Activated T-helper 2 cell treated with anti-CD3 and anti-CD28 coated beads, Interferon-gamma antibody, Interleukin-2, Interleukin-4, amounts not matched to agents 10 μg/mL and 5 μg/mL and 100 μg/mL, durations not matched to agents 14 hours and 24 hours and 36 hours (primary cell): ENCODE measurements at regions of chr6 and their contacts with region 1.

Region 1: GRCh38 chr6:21593412-21593926 is at the start of gene SOX4:
- DNase-seq: peak; percentile 77
- H3K4me3 Mint-ChIP-seq: no peak within 1 kb of the TSS
- H3K27ac Mint-ChIP-seq: peak within 1 kb of the TSS; percentile 91
- H3K4me1 Mint-ChIP-seq: peaks cover 22% of the 10 kb centered on the region
- H3K27me3 Mint-ChIP-seq: peaks cover 47% of the 10 kb centered on the region
- total RNA-seq, gene SOX4: 20.3 and 20.8 TPM in 2 replicates

Region 2: GRCh38 chr6:20197251-20197650 is 1396.2 kb before region 1 on chr6:
- intact Hi-C with region 1: loop called (anchors 10 kb)
- DNase-seq: no peak
- H3K4me3 Mint-ChIP-seq: no peak overlapping the region
- H3K27ac Mint-ChIP-seq: no peak overlapping the region
- H3K4me1 Mint-ChIP-seq: peaks cover 54% of the 10 kb centered on the region
- H3K27me3 Mint-ChIP-seq: no peaks in the 10 kb centered on the region

Region 3: GRCh38 chr6:20716865-20717264 is 876.6 kb before region 1 on chr6:
- intact Hi-C with region 1: loop called (anchors 5 kb)
- DNase-seq: no peak
- H3K4me3 Mint-ChIP-seq: no peak overlapping the region
- H3K27ac Mint-ChIP-seq: no peak overlapping the region
- H3K4me1 Mint-ChIP-seq: peaks cover 26% of the 10 kb centered on the region
- H3K27me3 Mint-ChIP-seq: no peaks in the 10 kb centered on the region

Region 4: DNA sequence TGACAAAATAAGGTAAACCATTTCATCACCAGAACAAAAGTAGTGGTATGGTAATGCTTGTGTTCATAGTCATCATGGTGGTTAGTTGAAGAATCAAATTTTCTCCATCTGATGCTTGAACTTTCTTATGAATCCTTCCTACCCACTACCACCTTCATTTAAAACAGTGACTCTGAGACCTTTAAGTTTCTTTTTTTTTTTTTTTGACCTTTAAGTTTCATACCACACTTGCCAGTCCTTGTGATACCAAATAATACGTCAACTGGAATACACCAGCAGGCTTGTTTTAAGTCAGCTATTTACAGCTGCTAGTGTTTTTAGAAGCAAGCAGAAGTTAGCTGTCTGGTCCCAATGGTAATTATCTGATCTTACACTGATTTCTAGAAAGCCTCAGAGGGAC is 413.3 kb before region 1 on chr6:
- intact Hi-C with region 1: loop called (anchors 5 kb)
- DNase-seq: no peak
- H3K4me3 Mint-ChIP-seq: no peak overlapping the region
- H3K27ac Mint-ChIP-seq: peak overlapping the region; percentile 53
- H3K4me1 Mint-ChIP-seq: peaks cover 23% of the 10 kb centered on the region
- H3K27me3 Mint-ChIP-seq: no peaks in the 10 kb centered on the region

Region 5: DNA sequence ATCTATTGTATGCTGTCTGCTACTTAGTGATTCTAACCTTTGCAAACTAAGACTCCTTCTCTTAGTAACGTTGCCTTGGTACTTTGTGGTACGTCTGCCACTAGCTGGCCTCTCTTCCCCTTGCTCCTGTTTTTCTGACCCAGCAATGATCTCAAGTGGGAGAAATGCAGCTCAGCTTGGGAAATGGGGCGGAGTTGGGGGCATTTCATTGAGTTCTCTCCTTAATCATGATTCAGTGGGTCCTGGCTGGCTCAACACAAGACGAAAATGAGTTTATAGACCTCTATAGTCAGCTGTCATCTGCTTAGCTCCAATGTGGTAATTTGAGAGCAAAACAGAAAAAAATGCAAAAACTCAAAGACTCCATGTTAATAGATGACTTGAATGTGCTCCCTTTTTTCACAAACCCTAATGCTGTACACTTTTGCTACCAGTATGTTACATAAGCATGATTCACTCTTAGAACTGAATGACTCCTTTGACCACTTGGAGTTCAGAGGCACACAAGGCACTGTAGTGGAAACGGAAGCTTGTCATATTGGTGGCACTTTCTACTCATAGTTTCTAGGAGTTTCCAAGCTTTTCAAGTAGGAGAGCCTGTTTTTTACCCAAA is 55.2 kb before region 1 on chr6:
- intact Hi-C with region 1: no loop called
- DNase-seq: no peak
- H3K4me3 Mint-ChIP-seq: no peak overlapping the region
- H3K27ac Mint-ChIP-seq: no peak overlapping the region
- H3K4me1 Mint-ChIP-seq: no peaks in the 10 kb centered on the region
- H3K27me3 Mint-ChIP-seq: peaks cover 1% of the 10 kb centered on the region

Region 6: GRCh38 chr6:21578523-21578922 is 14.9 kb before region 1 on chr6:
- intact Hi-C with region 1: no loop called
- DNase-seq: no peak
- H3K4me3 Mint-ChIP-seq: no peak overlapping the region
- H3K27ac Mint-ChIP-seq: no peak overlapping the region
- H3K4me1 Mint-ChIP-seq: no peaks in the 10 kb centered on the region
- H3K27me3 Mint-ChIP-seq: peaks cover 2% of the 10 kb centered on the region

Region 7: GRCh38 chr6:21610341-21610740 is 16.9 kb after region 1 on chr6:
- intact Hi-C with region 1: no loop called
- DNase-seq: no peak
- H3K4me3 Mint-ChIP-seq: no peak overlapping the region
- H3K27ac Mint-ChIP-seq: no peak overlapping the region
- H3K4me1 Mint-ChIP-seq: peaks cover 3% of the 10 kb centered on the region
- H3K27me3 Mint-ChIP-seq: peaks cover 15% of the 10 kb centered on the region

Region 8: GRCh38 chr6:21664314-21665109 is 71.0 kb after region 1 on chr6:
- intact Hi-C with region 1: loop called (anchors 2 kb)
- DNase-seq: no peak
- H3K4me3 Mint-ChIP-seq: peak overlapping the region; percentile 75
- H3K27ac Mint-ChIP-seq: no peak overlapping the region
- H3K4me1 Mint-ChIP-seq: peaks cover 16% of the 10 kb centered on the region
- H3K27me3 Mint-ChIP-seq: peaks cover 62% of the 10 kb centered on the region

Region 9: GRCh38 chr6:21769405-21769861 is 176.0 kb after region 1 on chr6:
- intact Hi-C with region 1: no loop called
- DNase-seq: no peak
- H3K4me3 Mint-ChIP-seq: no peak overlapping the region
- H3K27ac Mint-ChIP-seq: no peak overlapping the region
- H3K4me1 Mint-ChIP-seq: peaks cover 11% of the 10 kb centered on the region
- H3K27me3 Mint-ChIP-seq: peaks cover 2% of the 10 kb centered on the region

Region 10: DNA sequence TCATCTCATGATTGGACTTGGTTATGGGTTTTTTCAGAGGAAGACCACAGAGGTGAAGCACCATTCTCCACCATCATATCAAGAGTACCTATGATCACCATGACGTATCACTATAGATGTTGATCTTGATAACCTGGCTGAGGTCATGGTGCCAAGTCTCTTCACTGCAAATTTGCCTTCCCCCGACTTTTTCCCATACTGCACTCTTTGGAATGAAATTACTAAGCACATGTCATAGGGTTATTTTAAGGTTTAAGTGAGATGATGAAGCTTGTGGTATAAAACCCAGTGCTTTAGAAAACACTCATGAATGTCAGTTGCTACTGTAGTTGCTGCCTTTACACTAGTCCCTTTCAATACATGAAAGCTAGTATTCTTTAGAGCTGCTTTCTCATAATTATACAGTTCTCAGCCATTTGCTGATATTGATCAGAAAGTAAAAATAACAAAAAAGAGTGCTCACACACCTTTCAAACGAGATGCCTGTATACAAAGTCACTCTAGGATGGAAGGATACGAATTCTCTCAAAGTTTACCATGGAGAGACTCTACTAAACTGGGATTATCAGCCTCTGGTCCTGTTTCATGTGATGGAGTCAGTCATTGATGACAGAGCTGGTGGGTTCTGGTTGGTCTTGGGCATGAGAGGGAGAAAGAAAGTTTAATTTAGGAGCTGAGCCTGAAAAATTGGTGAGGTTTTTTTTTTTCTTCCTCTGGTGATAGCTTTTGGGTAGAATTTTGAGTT is 475.3 kb after region 1 on chr6:
- intact Hi-C with region 1: loop called (anchors 2 kb)
- DNase-seq: peak; percentile 13
- H3K4me3 Mint-ChIP-seq: peak overlapping the region; percentile 59
- H3K27ac Mint-ChIP-seq: peak overlapping the region; percentile 98
- H3K4me1 Mint-ChIP-seq: peaks cover 71% of the 10 kb centered on the region
- H3K27me3 Mint-ChIP-seq: no peaks in the 10 kb centered on the region